ENCODE measurements at regions of chr1 and their contacts with region 1.

Region 1: GRCh38 chr1:15430787-15431570 is 7.3 kb upstream of the CTRC start:
- DNase-seq: no peak
- H3K4me3 ChIP-seq: no peak overlapping the region
- H3K27ac ChIP-seq: peak overlapping the region; percentile 21
- H3K27me3 ChIP-seq: no peaks in the 10 kb centered on the region
- CTCF ChIP-seq: peak; percentile 94

Region 2: GRCh38 chr1:15272009-15272788 is 158.8 kb before region 1 on chr1:
- CTCF ChIA-PET with region 1: interaction called, 17 read pairs
- POLR2A ChIA-PET with region 1: no interaction called
- DNase-seq: peak; percentile 47
- H3K4me3 ChIP-seq: no peak overlapping the region
- H3K27ac ChIP-seq: no peak overlapping the region
- H3K27me3 ChIP-seq: peaks cover 16% of the 10 kb centered on the region
- CTCF ChIP-seq: peak; percentile 89

Region 3: DNA sequence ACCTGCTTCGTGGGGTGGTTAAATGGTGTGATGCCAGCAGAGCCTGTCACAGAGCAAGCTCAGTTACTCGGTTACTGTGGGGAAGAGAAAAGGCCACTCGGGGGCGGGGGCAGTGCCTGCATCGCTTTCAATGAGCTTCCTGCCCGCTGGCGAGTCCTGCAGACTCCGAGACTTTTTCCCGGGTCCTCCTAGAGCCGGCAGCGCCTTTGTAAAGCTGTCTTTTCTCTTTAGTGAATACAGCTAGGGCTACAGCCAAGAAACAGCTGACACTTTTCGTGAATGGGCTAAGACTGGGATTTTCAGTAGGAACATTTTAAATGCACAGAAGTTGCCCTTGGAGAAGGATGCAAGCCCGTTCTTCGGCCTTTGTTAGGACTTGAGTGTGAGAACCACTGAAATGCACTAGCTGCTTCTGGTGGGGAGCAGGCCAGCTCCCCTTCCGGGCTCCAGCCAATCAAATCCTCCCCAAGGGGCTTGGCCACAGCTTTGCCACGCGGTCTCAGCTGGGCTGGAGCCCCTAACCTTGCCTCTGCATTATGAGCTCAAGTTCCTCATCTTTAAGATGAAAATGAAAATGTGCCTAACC is 44.7 kb before region 1 on chr1:
- CTCF ChIA-PET with region 1: interaction called, 10 read pairs
- POLR2A ChIA-PET with region 1: no interaction called
- DNase-seq: no peak
- H3K4me3 ChIP-seq: no peak overlapping the region
- H3K27ac ChIP-seq: no peak overlapping the region
- H3K27me3 ChIP-seq: peaks cover 6% of the 10 kb centered on the region
- CTCF ChIP-seq: no peak

Region 4: DNA sequence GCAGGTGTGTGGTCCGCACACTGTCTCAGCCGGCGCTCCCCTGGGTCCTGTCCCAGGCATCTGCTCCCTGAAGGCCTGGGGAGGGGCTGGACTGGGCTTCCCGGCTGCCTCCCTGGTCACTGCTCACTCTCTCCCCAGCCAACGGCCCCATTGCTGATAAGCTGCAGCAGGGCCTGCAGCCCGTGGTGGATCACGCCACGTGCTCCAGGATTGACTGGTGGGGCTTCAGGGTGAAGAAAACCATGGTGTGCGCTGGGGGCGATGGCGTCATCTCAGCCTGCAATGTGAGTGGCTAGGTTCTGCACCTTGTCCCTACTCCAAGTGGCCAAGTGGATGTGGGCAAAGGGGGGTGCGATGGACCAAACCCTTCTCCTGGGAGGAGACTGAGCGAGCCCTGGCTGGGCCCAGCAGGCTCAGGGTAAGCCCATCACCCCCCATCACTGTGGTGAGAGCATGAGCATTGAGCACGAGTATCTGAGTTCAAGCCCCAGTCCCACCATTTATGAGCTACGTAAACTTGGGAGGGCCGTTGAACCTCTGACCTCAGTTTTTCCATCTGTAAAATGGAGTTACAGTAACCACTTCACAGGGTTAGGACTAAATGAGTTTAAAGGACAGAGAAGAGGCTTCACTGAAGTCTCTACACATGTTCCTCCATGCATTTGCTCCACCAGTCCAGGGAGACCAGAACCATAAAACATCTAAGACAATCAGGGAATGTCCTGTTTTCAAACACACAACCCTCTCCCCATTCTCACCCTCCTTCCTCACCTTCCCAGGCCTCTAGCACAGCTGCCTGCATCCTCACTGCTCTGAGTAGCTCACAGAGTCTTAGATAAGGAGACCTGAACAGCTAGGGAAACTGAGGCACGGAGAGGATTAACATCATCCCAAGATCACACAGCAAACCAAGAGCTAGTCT is 13.8 kb after region 1 on chr1:
- CTCF ChIA-PET with region 1: interaction called, 12 read pairs
- POLR2A ChIA-PET with region 1: no interaction called
- DNase-seq: no peak
- H3K4me3 ChIP-seq: no peak overlapping the region
- H3K27ac ChIP-seq: no peak overlapping the region
- H3K27me3 ChIP-seq: peaks cover 14% of the 10 kb centered on the region
- CTCF ChIP-seq: no peak

Region 5: DNA sequence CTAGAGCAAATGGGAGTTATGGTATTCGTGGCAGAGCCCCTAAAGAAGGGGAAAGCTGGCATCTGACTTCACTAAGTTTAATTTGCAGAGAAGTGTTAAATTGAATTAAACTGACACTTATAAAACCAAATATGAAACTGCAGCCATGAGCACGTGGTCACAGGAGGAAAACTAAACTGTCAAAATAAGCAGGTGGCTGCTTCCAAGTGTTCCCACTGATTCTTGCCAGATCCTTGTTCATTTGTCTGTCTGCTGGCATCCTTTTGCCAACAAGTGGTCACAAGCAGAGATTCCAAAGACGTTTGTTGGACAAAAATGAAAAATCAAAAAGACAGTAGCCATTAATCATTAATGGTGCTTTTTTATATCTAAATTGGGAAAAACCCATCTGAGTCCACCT is 38.4 kb after region 1 on chr1:
- CTCF ChIA-PET with region 1: no interaction called
- POLR2A ChIA-PET with region 1: no interaction called
- DNase-seq: no peak
- H3K4me3 ChIP-seq: no peak overlapping the region
- H3K27ac ChIP-seq: no peak overlapping the region
- H3K27me3 ChIP-seq: peaks cover 3% of the 10 kb centered on the region
- CTCF ChIP-seq: no peak

Region 6: DNA sequence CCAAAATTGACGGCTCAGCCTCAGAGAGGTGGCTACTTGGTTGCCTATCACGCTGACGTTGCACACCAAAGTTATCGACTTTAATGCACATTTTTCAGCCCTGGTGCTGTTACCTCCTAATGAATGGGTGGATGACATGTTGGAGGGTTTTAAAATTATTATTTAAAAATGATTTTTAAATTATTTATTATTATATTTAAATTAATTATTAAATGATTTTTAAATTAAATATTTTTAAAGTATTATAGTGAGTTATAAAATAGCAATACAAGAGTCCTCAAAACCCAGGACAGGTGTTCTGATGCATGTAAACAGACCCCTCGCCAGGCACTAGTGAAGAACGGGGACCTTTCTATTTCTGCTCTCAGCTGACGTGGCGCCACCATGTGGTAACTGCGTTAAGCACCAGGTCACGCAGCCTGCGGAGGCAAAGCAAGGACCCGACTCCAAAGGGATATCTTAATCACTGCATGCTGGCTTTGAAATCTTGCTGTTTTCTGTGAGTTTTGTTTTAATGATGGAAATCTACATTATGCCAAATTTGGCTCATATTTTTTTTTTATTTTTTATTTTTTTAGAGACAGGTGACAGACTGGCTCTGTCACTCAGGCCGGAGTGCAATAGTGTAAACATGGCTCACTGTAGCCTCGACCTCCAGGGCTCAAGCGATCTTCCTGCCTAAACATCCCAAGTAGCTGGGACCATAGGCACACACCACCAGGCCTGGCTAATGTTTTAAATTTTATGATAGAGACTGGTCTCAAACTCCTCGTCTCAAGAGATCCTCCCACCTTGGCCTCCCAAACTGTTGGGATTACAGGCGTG is 70.4 kb after region 1 on chr1:
- CTCF ChIA-PET with region 1: interaction called, 10 read pairs
- POLR2A ChIA-PET with region 1: no interaction called
- DNase-seq: no peak
- H3K4me3 ChIP-seq: no peak overlapping the region
- H3K27ac ChIP-seq: no peak overlapping the region
- H3K27me3 ChIP-seq: no peaks in the 10 kb centered on the region
- CTCF ChIP-seq: peak; percentile 84